ENCODE measurements at regions of chr1 and their contacts with region 1.

Region 1: GRCh38 chr1:170664828-170665612 is 1.1 kb downstream of the PRRX1 start:
- DNase-seq: peak; percentile 78
- ATAC-seq: peak; percentile 67

Region 2: DNA sequence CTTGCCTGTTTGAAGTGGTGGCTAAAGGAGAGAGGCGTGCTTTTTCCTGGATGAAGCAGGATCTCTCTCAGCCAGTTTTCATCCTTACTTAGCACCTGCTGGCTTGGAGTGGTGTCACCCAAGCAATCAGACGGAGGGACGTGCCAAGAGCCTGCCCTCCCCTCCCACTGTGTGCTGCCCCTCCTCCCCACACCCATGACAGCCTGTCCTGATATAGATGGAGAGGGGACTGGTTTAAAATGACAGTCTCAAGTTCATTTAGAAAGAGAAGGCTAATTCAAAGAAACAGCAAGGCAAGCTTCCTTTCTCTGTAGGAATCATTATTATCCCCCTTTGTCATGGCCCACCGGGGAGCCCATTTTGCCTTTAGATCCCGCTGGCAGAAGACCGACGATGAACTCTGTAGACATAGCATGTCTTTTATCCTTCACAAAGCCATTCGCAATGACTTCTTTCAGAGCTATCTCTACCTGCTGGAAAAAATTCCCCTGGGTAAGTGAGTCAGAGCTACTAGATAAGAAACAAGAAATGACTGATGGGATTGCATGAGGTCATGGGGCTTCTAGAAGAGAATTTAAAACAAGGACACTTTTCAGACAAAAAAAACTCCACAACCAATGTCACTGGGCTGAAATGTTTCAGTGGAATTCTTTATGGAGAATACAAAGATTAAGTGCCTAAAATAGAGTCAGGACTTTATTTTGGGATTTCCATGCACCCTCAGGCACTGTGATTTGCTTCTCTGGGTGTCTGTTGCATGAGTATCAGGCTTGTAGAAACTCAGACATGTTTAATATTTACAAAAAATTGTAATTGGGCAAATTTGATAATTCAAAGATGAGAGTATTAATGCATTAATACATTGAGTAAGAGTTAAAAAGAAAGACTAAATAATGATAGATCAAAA is 519.0 kb before region 1 on chr1 and contains the start of gene NTMT2:
- intact Hi-C with region 1: loop called (anchors 5 kb)
- DNase-seq: peak; percentile 63
- ATAC-seq: peak; percentile 95
- total RNA-seq, gene NTMT2: 5.3 TPM

Region 3: GRCh38 chr1:170531758-170532657 is 133.0 kb before region 1 on chr1 and contains the start of gene GORAB:
- intact Hi-C with region 1: loop called (anchors 2 kb)
- DNase-seq: peak; percentile 96
- ATAC-seq: peak; percentile 98
- total RNA-seq, gene GORAB: 7.8 TPM

Region 4: DNA sequence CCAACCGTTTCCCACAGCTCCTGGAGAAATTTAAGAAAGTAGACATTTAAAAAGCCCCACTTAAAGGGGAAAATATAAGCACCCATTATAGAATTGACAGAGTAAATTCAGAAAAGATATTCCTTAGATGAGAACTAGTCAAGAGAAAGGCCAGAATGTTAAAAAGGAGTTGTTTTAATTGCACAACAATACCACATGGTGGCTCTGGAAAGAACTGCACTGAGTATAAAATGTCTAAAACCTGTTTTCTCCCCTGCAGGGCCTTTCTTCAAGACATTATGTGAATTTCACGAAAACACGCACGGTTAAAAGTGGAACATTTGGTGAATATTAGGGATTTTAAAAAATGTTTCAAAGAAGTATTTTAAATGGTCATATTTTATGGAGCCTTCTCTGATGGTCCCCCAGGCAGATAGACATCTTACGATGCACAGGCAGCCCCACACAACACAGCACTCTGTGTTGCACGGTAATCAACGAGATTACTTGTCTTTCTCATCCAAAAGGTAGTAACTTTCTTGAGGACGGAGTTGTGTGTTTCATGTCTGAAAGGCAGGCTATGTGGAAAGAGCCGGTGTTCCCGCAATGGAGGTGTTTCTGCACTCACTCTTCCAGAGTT is 100.8 kb after region 1 on chr1:
- intact Hi-C with region 1: loop called (anchors 10 kb)
- DNase-seq: no peak
- ATAC-seq: peak; percentile 54

Region 5: DNA sequence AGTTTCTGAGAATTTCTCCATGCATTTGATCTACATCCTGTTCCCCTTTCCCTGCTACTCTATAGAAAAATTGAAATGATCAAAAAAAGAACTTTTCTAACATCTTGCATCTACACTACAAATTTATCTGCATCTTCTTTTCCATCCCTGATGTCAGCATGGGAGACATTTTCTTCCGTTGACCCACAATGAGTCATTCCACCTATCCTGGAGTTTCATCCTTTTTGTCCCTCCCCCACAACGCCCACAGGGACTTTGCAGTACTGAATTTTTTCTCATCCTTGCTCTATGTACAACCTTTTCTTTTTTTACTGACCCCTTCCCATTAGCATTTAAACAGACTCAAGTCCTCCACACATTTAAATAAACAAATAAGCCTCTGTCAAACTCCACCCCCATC is 158.1 kb after region 1 on chr1:
- intact Hi-C with region 1: no loop called
- DNase-seq: no peak
- ATAC-seq: no peak